ENCODE measurements at regions of chr13 and their contacts with region 1.

Region 1: DNA sequence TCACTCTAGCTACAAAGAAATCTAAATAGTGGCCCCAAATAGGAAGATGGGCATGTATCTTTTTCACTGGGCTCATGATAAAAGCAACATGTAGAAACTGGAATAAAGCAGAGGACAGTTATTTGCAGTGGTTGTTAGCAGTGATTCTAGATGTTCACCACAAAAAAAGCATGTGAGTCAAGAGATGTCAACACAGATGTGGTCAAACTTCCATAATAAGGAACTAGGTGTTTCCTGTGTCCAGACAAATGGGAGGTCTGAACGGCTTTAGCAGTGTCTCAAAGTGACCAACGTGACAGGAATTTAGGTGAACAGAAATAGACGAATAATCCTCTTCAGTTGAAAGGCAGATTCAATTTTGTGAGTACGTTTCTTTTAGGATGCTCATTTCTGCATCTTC is 162.7 kb downstream of the TBC1D4 start:
- DNase-seq: no peak
- H3K4me3 ChIP-seq: no peak overlapping the region
- H3K4me3 Mint-ChIP-seq: peak overlapping the region in 2 of 8 donors; percentile 5 to 45
- H3K27ac ChIP-seq: no peak overlapping the region
- H3K27ac Mint-ChIP-seq: peak overlapping the region in 5 of 7 donors; percentile 21 to 55 (median 43)
- H3K4me1 ChIP-seq: peaks cover 72% of the 10 kb centered on the region
- H3K4me1 Mint-ChIP-seq: peaks cover 32 to 68% (median 48%) of the 10 kb centered on the region in 4 donors
- H3K27me3 ChIP-seq: no peaks in the 10 kb centered on the region
- H3K27me3 Mint-ChIP-seq: no peaks in the 10 kb centered on the region

Region 2: GRCh38 chr13:75357576-75358289 is 38.5 kb after region 1 on chr13:
- CTCF ChIA-PET with region 1: no interaction called
- POLR2A ChIA-PET with region 1: no interaction called
- intact Hi-C with region 1: loop called (anchors 2 kb)
- DNase-seq: peak; percentile 50 to 62 (median 55)
- H3K4me3 ChIP-seq: no peak overlapping the region
- H3K4me3 Mint-ChIP-seq: no peak overlapping the region
- H3K27ac ChIP-seq: no peak overlapping the region
- H3K27ac Mint-ChIP-seq: no peak overlapping the region
- H3K4me1 ChIP-seq: no peaks in the 10 kb centered on the region
- H3K4me1 Mint-ChIP-seq: peaks cover 0 to 3% (median 1%) of the 10 kb centered on the region in 4 donors
- H3K27me3 ChIP-seq: no peaks in the 10 kb centered on the region
- H3K27me3 Mint-ChIP-seq: peaks cover 0 to 4% of the 10 kb centered on the region in 2 donors

Measured in CD4-positive, alpha-beta memory T cell (primary cell).